BJ (cell line): ENCODE measurements at regions of chr2 and their contacts with region 1.

Region 1: DNA sequence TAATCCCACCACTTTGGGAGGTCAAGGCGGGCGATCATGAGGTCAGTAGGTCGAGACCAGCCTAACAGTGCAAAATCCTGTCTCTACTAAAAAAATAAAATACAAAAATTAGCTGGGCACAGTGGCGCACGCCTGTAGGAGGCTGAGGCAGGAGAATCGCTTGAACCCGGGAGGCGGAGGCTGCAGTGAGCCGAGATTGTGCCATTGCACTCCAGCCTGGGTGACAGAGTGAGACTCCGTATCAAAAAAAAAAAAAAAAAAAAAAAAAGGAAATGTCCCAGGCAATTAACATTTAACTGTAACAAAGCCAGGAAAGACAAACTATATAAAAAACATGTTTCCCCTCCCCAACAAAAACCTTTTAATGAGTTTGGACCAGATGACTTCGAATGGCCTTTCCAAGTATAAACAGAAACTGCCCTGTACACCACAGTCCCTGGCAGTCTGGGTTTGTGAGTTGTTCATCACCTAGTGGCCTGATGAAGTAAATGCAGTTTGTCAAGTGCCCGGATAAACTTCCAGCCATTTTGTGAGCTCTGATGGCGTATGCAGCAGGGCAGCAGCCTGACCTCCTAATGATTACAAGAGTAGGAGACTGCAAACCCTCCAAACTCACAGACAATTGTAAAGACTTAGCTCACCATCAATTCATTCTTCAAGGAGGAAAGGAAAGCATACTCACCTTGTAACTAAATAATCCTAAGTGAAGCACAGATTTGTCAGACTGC is 16.6 kb upstream of the PCBP1 start:
- DNase-seq: peak; percentile 50
- H3K4me3 ChIP-seq: no peak overlapping the region
- H3K27me3 ChIP-seq: no peaks in the 10 kb centered on the region
- CTCF ChIP-seq: peak; percentile 93

Region 2: DNA sequence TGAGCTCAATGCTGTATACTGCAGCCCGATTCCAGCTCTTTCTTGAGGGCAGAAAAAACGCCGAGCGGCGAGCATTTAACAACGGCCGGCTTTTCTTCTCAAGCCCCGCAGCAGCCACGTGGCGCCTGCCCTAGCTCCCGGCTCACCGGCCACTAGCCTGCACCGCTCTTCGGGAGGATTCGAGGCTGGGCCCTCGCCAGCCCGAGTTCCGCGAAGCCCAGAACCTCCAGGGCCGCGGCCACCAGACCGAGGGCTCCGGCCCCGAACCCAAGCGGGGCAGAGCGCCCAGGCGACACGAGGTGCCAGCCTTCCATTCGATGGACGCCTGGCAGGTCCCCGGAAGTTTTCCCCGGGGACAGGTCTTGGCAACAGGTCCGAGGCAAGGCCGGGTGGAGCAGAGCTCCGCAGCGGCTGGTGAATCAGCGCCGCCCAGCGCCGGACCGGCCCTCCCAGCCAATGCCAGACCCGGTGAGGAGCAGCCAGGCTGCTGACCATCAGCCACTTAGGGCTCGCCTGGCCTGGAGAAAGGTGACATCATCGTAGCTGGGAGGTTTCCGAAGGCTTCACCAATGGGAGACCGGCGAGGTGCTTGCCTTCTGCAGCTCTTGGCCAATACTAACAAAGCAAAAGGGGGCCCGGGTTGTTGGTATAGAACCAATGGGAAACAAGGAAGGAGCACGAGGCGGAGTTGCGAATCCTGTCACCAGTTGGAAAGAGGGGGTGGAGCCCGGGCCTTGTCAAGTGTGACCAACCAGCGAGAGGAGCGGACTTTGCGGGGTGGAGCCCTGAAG is 156.3 kb before region 1 on chr2:
- CTCF ChIA-PET with region 1: interaction called, 84 read pairs
- POLR2A ChIA-PET with region 1: interaction called, 4 read pairs
- DNase-seq: peak; percentile 100
- H3K4me3 ChIP-seq: peak overlapping the region; percentile 78
- H3K27me3 ChIP-seq: no peaks in the 10 kb centered on the region
- CTCF ChIP-seq: peak; percentile 18; the same call in 1 of the 2 replicates

Region 3: DNA sequence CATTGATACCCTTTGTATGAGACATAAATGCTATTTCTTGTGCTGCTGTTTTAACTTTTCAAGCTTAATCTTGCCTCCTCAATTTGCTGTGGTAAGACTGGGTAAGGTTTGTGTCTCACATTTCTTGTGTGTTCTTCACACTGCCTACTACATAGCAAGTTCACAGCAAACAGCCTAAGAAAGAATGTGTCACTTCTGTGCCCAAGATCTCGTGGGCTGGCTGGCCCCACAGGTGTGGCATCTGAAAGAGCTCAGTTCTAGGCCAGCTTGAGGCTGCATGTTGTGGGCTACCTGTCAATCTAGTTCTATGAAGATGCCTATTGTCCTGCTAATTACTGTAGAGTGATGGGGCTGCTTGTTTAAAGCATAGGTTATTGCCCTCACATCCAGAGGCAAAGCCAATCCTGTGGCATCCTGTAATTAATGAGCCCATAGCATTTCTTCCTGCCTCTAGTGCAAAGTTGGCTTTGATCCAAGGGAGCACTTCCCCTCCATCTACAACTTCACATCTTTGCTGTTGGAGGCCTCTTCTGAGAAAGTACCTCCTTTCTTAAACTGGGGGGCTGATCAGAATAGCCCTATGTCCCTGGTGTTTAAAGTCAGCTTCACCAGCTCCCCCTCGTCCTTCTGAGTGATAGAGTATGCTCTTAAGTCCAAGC is 68.3 kb before region 1 on chr2:
- CTCF ChIA-PET with region 1: no interaction called
- POLR2A ChIA-PET with region 1: no interaction called
- DNase-seq: no peak
- H3K4me3 ChIP-seq: no peak overlapping the region
- H3K27me3 ChIP-seq: no peaks in the 10 kb centered on the region
- CTCF ChIP-seq: no peak

Region 4: DNA sequence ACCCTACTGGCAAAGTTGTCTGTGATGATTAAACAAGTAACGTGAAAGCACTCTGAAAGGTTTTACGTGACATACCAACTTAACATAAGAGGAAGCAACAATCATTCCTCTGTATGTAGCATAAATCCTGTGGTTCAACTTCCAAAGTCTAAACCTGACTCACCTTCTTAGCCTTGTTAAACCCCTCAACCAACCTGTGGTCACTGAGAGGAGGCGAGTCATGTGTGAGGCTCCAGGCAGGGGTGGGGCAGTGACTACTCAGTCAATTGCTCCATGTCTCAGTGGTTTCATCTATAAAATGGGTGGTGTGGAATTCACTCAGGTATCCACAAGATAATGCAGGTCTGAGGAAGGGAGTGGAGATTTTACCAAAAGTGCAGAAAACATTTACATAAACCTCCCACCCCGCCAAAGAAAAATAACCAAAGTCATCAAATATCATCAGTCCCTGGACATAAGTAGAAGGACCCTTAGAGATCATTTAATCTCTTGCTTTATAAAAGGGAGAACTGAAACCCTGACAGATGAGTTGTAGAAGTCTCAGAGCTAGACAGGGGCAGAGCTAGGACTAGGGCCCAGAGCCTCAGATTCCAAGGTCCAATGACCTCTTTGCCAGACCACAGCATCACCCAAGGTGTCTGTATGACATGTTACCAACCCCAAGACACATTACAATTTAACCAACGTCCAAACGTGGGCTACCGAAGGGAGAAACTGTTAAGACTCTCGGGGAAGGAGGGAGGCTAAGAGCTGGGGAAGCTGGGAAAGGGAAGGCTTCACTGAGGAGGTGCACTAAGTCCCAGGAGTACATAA is 12.8 kb after region 1 on chr2:
- CTCF ChIA-PET with region 1: interaction called, 20 read pairs
- POLR2A ChIA-PET with region 1: no interaction called
- DNase-seq: no peak
- H3K4me3 ChIP-seq: no peak overlapping the region
- H3K27me3 ChIP-seq: no peaks in the 10 kb centered on the region
- CTCF ChIP-seq: no peak